ENCODE measurements at regions of chr11 and their contacts with region 1.

Region 1: GRCh38 chr11:121655537-121656327 is 203.0 kb upstream of the SORL1-AS1 start:
- DNase-seq: peak; percentile 81 to 96 (median 91)

Region 2: GRCh38 chr11:121722431-121723245 is 66.9 kb after region 1 on chr11:
- intact Hi-C with region 1: loop called (anchors 5 kb)
- DNase-seq: peak; percentile 88 to 98 (median 94)

Region 3: DNA sequence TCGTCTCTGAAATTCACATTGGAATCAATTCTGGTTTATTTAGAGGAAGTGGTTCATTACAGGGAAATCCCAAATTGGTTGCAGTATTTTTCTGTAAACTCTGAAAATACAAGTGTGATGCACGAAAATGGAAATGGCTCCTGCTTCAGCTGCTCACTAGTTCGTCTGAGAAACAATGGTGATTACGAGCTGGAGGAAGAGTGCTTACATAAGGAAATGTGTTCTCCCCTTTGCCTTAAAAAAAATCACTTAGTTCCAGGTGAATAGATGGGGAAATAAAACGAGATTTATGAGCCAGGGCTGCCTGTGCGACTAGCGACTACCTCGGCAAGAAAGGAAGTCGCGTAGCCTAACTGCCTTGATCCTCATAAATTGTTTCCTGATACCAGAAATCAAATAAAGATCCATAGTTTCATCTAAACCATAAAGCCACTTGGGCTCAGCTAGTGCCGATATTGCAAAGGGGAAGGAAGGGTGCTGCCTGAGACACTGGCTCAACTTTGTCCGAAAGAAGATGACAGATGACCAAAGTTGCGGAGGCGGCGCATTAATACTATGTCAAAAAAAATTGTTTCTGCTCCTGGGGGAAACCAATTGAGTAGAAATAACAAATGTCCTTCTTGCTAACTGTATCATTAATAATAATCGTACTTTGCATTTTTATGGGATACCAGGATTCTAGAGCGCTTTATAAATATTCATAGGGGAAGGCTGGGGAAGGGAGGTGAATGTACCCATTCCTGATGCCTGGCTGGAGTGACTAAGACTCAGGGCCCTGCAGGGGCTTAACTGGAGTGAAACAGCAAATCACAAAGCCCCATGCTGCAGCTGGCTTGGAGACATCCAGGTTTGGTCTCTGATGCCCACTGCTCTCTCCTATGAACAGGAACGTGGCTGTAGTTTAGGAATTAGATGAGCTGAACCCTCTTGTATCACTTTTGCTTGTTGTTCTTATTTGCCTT is 274.6 kb after region 1 on chr11:
- intact Hi-C with region 1: loop called (anchors 10 kb)
- DNase-seq: peak in 26 of 42 donors; percentile 4 to 60 (median 27)

Region 4: DNA sequence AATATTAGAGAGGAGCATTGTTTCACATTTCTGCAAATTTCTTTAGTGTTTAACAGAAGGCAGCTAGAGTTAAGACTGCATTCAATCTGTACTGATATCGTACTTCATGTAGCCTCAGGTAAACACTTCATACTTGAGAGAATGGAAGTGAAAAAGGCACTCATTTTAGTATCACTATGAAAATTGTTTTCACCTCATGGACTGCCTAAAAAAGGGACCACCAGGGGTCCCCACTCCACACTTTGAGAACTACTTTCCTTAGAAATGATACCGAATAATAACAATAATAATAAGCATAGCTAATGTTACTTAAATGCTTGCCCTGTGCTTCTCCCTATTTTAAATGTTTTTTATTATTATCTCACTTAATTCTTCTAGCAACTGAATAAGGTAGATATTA is 365.2 kb after region 1 on chr11:
- intact Hi-C with region 1: loop called (anchors 10 kb)
- DNase-seq: peak in 13 of 42 donors; percentile 12 to 69 (median 29)

Region 5: DNA sequence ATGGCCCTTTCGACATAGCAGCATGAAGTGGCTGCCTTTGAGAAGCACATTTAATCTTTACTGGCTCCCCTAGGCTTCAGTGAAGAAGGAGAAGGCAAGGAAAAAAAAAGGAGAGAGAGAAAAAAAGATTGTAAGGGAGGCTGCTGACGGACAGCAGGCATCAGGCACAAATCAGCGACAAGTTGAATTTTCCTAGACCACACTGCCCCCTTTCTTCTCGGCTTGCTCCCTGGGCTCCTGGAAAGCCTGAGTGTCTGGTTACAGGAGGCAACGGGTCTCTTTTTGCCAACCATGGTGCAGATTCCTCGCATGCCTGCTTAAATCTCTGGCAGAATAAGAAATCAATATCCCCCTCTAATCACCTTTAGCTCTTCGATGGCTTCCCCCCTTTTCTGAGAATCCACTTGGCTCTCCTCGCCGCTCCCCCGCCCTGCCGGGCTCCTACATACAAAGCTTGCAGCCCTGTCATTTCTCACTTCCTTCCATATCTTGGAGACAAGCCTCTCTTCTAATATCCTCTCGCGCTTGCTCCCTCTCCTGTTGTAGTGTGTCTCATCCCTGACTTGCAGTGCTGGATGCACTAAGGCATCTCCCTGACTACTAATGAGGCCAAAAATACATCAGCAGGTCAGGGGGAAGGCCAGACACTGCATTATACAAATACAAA is 446.0 kb after region 1 on chr11:
- intact Hi-C with region 1: loop called (anchors 2 kb)
- DNase-seq: peak; percentile 57 to 95 (median 86)

Region 6: GRCh38 chr11:122202951-122203456 is 547.3 kb after region 1 on chr11:
- intact Hi-C with region 1: loop called (anchors 5 kb)
- DNase-seq: peak; percentile 44 to 93 (median 81)

Region 7: GRCh38 chr11:122505304-122506006 is 849.7 kb after region 1 on chr11:
- intact Hi-C with region 1: loop called (anchors 5 kb)
- DNase-seq: peak; percentile 70 to 96 (median 89)